ENCODE measurements at regions of chr19 and their contacts with region 1.

Region 1: DNA sequence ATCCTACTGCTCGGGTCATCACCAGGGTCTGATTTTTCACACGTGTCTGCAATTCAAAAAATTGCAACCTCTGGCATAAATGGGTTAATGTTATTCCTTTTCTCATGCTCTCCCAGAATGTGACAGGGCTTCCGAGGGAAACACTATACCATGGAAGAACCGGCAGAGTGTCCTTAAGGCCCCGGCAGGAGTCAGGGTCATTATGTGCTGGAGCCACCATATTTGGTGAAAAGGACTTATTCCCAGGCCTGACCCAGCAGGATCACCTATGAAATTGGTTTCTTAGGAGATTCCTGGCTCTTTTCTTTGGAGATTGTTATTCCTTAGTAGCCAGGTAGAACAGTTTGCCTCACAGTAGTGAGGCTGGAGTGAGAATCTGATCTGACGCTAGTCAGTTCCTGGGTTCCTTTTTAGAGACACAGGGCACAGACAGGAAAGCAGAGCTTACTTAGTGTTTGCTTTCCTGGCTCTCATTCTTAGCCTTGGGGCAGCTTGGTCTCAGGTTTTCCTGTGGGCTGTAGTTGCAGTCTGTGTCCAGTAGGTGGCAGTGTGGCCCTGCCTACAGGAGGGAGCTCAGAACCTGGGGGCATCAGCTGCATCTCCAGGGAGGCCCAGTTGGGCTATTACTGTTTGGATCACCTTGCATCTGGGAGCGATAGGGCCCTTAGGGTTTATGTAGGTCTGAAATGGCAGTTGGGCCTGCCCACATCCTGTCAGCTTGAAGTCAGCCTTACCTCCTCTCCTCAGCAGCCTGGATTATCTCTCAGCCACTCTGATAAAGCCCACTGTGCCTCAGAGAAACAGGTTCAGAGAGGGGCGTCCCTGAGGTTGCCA is 12.4 kb downstream of the SNRNP70 start:
- DNase-seq: peak; percentile 88 to 89
- ATAC-seq: peak; percentile 78 to 83
- H3K4me3 ChIP-seq: no peak overlapping the region
- H3K27ac ChIP-seq: peak overlapping the region in 1 of 2 experiments; percentile 46; a peak in 2 of 6 replicates
- H3K4me1 ChIP-seq: peaks cover 21% of the 10 kb centered on the region
- CTCF ChIP-seq: peak; percentile 99
- EP300 ChIP-seq: no peak
- POLR2A ChIP-seq: no peak
- RAD21 ChIP-seq: peak; percentile 88 to 91

Region 2: DNA sequence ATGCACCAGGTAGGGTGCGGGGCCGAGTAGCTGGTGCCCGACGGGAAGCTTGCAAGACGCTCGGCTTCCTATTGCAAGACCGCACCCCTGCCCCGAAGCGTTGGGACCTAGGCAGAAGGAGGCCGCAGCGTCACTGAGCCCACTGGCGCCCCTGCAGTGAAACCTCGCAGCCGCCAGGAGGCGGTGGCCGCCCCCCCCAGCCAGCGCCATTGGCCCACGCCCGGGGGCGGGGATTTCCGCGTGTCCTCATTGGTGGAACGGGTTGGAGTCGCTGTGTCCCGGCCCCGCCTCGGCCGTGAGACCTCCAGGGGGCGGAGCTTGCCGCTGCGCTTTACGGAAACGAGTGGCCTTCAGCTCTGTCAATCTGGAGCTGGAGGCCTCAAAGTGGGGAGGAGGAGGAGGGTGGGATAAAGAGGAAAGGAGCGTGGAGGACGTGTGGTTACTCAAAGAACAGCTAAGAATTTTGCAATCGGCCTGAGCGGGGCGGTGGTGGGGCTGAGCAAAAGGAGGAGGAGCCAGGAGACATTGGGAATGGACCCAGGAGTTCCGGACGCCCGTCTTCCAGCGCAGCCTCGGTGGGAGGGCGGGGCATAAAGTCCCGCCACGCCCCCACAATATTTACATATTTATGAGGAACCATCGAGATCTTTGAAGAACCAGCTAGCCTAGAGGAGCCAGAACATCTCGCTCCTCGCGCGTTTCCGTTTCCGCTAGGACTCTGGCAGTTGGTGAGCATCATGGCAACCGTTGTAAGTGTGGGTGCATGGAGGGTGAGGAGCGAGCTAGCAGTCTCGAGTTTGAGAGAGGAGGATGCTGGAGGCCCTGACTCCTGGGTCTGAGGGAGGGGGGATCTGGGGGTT is 104.3 kb before region 1 on chr19 and contains the starts of genes GYS1 and RUVBL2:
- CTCF ChIA-PET with region 1: interaction called, 7 read pairs
- POLR2A ChIA-PET with region 1: interaction called, 11 read pairs
- DNase-seq: peak; percentile 100
- ATAC-seq: peak; percentile 89 to 94
- H3K4me3 ChIP-seq: peak within 1 kb of the TSS; percentile 73
- H3K27ac ChIP-seq: peak within 1 kb of the TSS; percentile 76 to 87
- H3K4me1 ChIP-seq: peaks cover 20% of the 10 kb centered on the region
- CTCF ChIP-seq: peak; percentile 82
- EP300 ChIP-seq: no peak
- POLR2A ChIP-seq: peak; percentile 92
- RAD21 ChIP-seq: peak in 1 of 2 experiments; percentile 39; a peak in 2 of 5 replicates
- polyA plus RNA-seq, gene GYS1: 10.3 and 16.4 TPM in 2 replicates
- polyA plus RNA-seq, gene RUVBL2: 146 and 186 TPM in 2 replicates

Region 3: DNA sequence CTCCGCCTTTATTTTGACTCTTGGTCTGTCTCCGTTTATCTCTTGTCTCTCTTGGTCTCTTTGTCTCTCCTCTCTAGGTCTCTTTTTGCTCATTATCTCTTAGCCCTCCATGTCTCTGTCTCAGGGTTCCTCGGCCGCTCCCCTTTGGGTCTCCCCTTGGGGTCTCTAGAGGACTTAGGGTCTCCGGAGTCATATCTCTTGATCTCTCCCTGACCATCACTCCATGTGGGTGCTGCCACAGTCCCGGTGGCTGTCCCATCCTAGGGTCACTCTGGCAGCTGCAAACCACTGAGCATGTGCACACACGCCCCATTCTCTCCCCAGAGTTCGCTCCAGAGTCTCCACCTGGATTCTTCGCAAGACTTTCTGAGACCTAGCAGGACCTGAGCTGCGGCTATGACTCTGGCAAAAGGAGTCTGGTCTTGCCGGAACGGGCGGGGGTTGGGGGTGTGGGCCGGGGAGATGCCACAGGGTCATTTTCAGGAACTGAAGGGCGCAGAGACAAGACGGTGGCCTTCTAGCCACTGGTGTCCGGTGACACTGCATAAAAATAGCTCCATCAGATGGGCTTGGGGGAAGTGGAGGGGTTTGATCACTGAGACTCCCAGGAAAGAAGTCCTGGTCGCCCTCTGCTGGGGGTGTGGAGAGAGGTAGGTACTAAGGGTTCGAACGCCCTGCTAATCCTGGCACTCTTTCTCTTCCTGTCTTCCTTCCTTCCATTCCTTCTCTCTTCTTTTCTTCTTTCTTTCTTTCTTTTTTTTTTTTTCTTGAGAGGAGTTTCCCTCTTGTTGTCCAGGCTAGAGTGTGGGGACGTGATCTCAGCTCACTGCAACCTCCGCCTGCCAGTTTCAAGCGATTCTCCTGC is 23.9 kb before region 1 on chr19:
- CTCF ChIA-PET with region 1: interaction called, 22 read pairs
- POLR2A ChIA-PET with region 1: no interaction called
- DNase-seq: peak; percentile 65 to 73
- ATAC-seq: peak; percentile 77 to 86
- H3K4me3 ChIP-seq: peak overlapping the region; percentile 6; the same call in 1 of the 3 replicates
- H3K27ac ChIP-seq: 0 out of 6 replicates have a peak overlapping the region, but pooled peaks of 1 of the 2 experiments have one; percentile 9
- H3K4me1 ChIP-seq: peaks cover 16% of the 10 kb centered on the region
- CTCF ChIP-seq: peak; percentile 62
- EP300 ChIP-seq: no peak
- POLR2A ChIP-seq: no peak
- RAD21 ChIP-seq: peak; percentile 40 to 66; a peak in 4 of 5 replicates

Region 4: GRCh38 chr19:49118565-49119410 is 21.1 kb after region 1 on chr19 and contains the start of gene C19orf73:
- CTCF ChIA-PET with region 1: interaction called, 241 read pairs
- POLR2A ChIA-PET with region 1: interaction called, 8 read pairs
- DNase-seq: peak; percentile 94 to 98
- ATAC-seq: peak; percentile 65 to 87
- H3K4me3 ChIP-seq: peak within 1 kb of the TSS; percentile 62
- H3K27ac ChIP-seq: peak within 1 kb of the TSS; percentile 95
- H3K4me1 ChIP-seq: peaks cover 20% of the 10 kb centered on the region
- CTCF ChIP-seq: no peak
- EP300 ChIP-seq: no peak
- POLR2A ChIP-seq: peak; percentile 64
- RAD21 ChIP-seq: no peak
- polyA plus RNA-seq, gene C19orf73: 1.4 and 1.8 TPM in 2 replicates

Region 5: DNA sequence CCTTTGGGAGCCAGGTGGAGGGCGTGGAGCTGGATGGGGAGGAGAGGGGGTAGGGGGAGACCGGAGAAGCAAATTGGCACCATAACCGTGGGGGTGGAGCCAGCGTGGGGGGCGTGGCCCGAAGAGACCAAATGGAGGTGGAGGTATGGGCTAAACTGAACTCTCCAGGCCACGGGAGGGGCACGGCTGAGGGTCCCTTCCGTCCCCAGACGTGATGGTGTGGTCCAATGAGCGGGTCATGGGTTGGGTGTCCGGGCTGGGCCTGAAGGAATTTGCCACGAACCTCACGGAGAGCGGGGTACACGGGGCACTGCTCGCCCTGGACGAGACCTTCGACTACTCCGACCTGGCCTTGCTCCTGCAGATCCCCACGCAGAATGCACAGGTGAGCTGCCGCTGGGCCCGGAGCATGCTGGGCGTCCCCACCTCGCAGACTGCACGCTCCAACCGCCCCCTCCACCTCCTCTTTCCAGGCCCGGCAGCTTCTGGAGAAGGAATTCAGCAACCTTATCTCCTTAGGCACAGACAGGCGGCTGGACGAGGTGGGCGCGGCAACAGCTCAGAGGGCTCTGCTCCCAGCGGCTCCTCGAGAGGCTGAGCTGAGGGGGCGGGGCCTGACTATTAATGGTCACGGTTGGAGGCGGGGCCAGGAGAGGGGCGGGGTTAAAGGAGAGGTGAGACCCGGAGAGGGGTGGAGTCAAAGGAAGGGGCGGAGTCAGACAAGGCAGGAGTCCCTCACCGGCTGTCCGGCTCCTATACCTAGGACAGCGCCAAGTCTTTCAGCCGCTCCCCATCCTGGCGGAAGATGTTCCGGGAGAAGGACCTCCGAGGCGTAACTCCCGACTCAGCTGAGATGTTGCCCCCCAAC is 51.3 kb after region 1 on chr19:
- CTCF ChIA-PET with region 1: interaction called, 104 read pairs
- POLR2A ChIA-PET with region 1: interaction called, 3 read pairs
- DNase-seq: peak; percentile 96 to 98
- ATAC-seq: peak; percentile 32 to 71
- H3K4me3 ChIP-seq: peak overlapping the region; percentile 68
- H3K27ac ChIP-seq: peak overlapping the region; percentile 76 to 83
- H3K4me1 ChIP-seq: peaks cover 31% of the 10 kb centered on the region
- CTCF ChIP-seq: no peak
- EP300 ChIP-seq: no peak
- POLR2A ChIP-seq: peak; percentile 33; the same call in 1 of the 2 replicates
- RAD21 ChIP-seq: no peak

Region 6: DNA sequence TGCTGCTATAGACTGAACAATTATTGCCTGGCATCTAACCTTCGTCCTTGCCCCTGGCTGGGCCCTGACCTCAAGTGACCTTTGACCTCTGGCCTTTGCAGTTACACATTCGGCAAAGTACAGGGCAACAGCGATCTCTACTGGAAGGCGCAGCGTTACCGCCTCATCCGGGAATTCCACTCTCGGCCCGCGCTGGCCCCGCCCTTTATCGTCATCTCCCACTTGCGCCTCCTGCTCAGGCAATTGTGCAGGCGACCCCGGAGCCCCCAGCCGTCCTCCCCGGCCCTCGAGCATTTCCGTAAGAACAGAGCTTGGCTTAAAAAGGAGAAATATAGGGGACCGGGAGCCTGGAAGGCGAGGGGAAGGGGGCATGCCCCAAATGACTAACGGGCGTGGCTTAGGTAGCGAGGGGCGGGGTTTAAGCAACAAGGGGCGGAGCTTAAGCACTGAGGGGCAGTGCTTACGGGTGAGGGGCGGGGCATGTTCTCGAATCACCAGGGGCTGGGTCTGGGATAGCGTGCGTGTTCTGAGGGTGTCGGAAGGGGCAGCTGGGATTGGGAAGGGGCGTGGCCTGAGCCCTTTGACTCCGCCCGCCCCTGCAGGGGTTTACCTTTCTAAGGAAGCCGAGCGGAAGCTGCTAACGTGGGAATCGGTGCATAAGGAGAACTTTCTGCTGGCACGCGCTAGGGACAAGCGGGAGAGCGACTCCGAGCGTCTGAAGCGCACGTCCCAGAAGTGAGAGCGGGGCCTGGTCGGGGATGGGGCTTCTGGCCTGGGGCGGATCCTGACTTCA is 112.6 kb after region 1 on chr19:
- CTCF ChIA-PET with region 1: interaction called, 44 read pairs
- POLR2A ChIA-PET with region 1: interaction called, 5 read pairs
- DNase-seq: peak in 1 of 2 experiments; percentile 69
- ATAC-seq: peak; percentile 27 to 57; a peak in 3 of 6 replicates
- H3K4me3 ChIP-seq: no peak overlapping the region
- H3K27ac ChIP-seq: no peak overlapping the region
- H3K4me1 ChIP-seq: 0 out of 3 replicates have a peak, but pooled peaks cover 3% of the 10 kb centered on the region
- CTCF ChIP-seq: no peak
- EP300 ChIP-seq: no peak
- POLR2A ChIP-seq: no peak
- RAD21 ChIP-seq: no peak

Measured in A549 (cell line).